ENCODE measurements at regions of chr6 and their contacts with region 1.

Region 1: DNA sequence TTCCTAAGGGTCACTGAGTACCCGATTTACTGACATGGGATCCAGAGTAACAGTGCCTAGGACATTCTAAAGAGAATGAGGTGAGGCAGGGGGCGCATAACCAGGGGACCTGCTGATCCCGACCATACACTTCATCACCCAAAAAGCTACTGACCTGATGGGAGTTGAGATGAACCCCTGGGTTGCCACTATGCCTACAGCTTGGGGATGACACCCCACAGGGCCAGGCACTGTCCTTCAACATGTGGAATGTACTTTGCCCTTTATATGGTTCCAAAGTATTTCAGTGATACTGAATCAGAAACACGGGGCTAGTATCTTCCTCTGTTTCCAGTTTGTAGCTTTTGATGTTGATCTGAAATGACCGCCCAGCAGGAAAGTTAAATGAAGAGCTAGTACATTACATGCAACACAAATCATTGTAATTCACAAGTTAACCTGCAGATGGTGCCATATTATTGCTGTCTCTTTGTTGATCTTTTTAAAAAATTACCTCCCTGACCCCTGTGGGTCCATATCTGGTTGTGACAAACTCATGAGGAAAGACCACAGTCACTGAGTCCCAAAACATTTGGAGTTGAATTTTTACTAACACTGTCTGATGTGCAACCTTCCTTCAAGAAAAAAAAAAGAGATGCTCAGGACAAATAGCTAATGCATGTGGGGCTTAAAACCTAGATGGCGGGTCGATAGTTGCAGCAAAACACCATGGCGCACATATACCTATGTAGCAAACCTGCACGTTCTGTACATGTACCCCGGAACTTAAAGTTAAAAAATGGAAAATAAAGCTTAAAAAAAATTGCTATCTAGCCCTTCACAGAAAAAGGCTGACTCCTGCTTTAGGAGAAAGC is 42.7 kb upstream of the GCNT2 start:
- DNase-seq: no peak
- ATAC-seq: peak; percentile 38 to 70 (median 60)
- H3K4me3 ChIP-seq: no peak overlapping the region
- H3K27ac ChIP-seq: no peak overlapping the region
- H3K4me1 ChIP-seq: no peaks in the 10 kb centered on the region
- H3K27me3 ChIP-seq: no peaks in the 10 kb centered on the region
- CTCF ChIP-seq: peak; percentile 58 to 66 (median 65)
- POLR2A ChIP-seq: no peak

Region 2: DNA sequence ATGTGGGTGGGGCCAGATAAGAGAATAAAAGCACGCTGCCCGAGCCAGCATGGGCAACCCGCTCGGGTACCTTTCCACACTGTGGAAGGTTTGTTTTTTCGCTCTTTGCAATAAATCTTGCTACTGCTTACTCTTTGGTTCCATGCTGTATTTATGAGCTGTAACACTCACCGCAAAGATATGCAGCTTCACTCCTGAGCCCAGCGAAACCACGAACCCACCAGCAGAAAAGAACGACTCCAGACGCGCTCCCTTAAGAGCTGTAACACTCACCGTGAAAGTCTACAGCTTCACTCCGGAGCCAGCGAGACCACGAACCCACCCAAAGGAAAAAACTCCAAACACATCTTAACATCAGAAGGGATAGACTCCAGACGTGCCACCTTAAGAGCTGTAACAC is 140.3 kb before region 1 on chr6:
- intact Hi-C with region 1: no loop called
- DNase-seq: no peak
- ATAC-seq: no peak
- H3K4me3 ChIP-seq: no peak overlapping the region
- H3K27ac ChIP-seq: no peak overlapping the region
- H3K4me1 ChIP-seq: no peaks in the 10 kb centered on the region
- H3K27me3 ChIP-seq: no peaks in the 10 kb centered on the region
- CTCF ChIP-seq: no peak
- POLR2A ChIP-seq: no peak

Region 3: GRCh38 chr6:10800829-10801535 is 322.6 kb after region 1 on chr6:
- intact Hi-C with region 1: loop called in 1 of 2 experiments (anchors 10 kb)
- DNase-seq: peak; percentile 54 to 68 (median 57)
- ATAC-seq: peak; percentile 97 to 99 (median 98)
- H3K4me3 ChIP-seq: no peak overlapping the region
- H3K27ac ChIP-seq: no peak overlapping the region
- H3K4me1 ChIP-seq: no peaks in the 10 kb centered on the region
- H3K27me3 ChIP-seq: no peaks in the 10 kb centered on the region
- CTCF ChIP-seq: peak; percentile 90 to 100 (median 99)
- POLR2A ChIP-seq: no peak